Calu3 (cell line): ENCODE measurements at regions of chr2 and their contacts with region 1.

Region 1: DNA sequence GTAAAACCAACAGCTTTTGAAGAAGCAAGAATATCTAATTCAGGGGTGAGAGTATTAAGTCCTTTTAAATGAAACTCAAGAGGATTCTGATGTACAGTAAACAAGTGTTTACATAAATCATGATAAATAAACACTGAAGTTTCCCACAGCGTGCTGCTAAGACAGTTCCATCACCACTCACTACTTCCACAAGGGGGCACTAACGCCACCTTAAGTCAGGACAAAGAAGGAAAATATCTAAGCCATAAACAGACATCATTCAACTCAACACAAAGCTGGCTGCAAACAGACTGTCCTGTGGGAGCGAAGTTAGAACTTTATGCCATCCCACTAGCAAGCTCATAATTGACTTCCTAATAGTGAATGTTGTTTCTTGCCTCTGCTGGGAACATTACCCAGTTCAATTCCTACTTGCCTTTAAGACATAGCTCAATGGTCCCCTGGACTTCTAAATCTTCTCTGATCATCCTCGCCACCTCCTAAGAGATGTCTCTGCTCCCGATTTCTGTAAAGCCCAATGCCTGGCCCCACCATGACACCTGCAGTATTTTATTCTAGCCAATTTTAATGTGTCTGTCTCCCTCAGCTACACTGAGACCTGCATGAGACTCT is 36.5 kb downstream of the MRPL44 start:
- DNase-seq: peak; percentile 74
- H3K4me3 Mint-ChIP-seq: no peak overlapping the region
- H3K27ac Mint-ChIP-seq: peak overlapping the region; percentile 81
- H3K4me1 Mint-ChIP-seq: peaks cover 33% of the 10 kb centered on the region
- H3K27me3 Mint-ChIP-seq: no peaks in the 10 kb centered on the region
- CTCF ChIP-seq: peak; percentile 72

Region 2: GRCh38 chr2:223970343-223971128 is 23.2 kb before region 1 on chr2:
- CTCF ChIA-PET with region 1: interaction called, 10 read pairs
- intact Hi-C with region 1: no loop called
- DNase-seq: peak; percentile 62
- H3K4me3 Mint-ChIP-seq: no peak overlapping the region
- H3K27ac Mint-ChIP-seq: no peak overlapping the region
- H3K4me1 Mint-ChIP-seq: no peaks in the 10 kb centered on the region
- H3K27me3 Mint-ChIP-seq: no peaks in the 10 kb centered on the region
- CTCF ChIP-seq: peak; percentile 73

Region 3: GRCh38 chr2:224039124-224039940 is 45.6 kb after region 1 on chr2 and contains the start of gene SERPINE2:
- CTCF ChIA-PET with region 1: interaction called, 6 read pairs
- intact Hi-C with region 1: loop called (anchors 1 kb)
- DNase-seq: peak; percentile 76
- H3K4me3 Mint-ChIP-seq: peak within 1 kb of the TSS; percentile 93
- H3K27ac Mint-ChIP-seq: peak within 1 kb of the TSS; percentile 59
- H3K4me1 Mint-ChIP-seq: peaks cover 40% of the 10 kb centered on the region
- H3K27me3 Mint-ChIP-seq: peaks cover 38% of the 10 kb centered on the region
- CTCF ChIP-seq: no peak
- total RNA-seq, gene SERPINE2: 34.7 and 39.7 TPM in 2 replicates

Region 4: GRCh38 chr2:224145751-224146355 is 152.1 kb after region 1 on chr2:
- CTCF ChIA-PET with region 1: interaction called, 5 read pairs
- intact Hi-C with region 1: loop called (anchors 5 kb)
- DNase-seq: no peak
- H3K4me3 Mint-ChIP-seq: no peak overlapping the region
- H3K27ac Mint-ChIP-seq: peak overlapping the region; percentile 14
- H3K4me1 Mint-ChIP-seq: peaks cover 46% of the 10 kb centered on the region
- H3K27me3 Mint-ChIP-seq: no peaks in the 10 kb centered on the region
- CTCF ChIP-seq: no peak

Region 5: GRCh38 chr2:224284134-224284946 is 290.6 kb after region 1 on chr2:
- CTCF ChIA-PET with region 1: interaction called, 50 read pairs
- intact Hi-C with region 1: loop called (anchors 1 kb)
- DNase-seq: peak; percentile 39
- H3K4me3 Mint-ChIP-seq: no peak overlapping the region
- H3K27ac Mint-ChIP-seq: no peak overlapping the region
- H3K4me1 Mint-ChIP-seq: no peaks in the 10 kb centered on the region
- H3K27me3 Mint-ChIP-seq: no peaks in the 10 kb centered on the region
- CTCF ChIP-seq: peak; percentile 91

Region 6: DNA sequence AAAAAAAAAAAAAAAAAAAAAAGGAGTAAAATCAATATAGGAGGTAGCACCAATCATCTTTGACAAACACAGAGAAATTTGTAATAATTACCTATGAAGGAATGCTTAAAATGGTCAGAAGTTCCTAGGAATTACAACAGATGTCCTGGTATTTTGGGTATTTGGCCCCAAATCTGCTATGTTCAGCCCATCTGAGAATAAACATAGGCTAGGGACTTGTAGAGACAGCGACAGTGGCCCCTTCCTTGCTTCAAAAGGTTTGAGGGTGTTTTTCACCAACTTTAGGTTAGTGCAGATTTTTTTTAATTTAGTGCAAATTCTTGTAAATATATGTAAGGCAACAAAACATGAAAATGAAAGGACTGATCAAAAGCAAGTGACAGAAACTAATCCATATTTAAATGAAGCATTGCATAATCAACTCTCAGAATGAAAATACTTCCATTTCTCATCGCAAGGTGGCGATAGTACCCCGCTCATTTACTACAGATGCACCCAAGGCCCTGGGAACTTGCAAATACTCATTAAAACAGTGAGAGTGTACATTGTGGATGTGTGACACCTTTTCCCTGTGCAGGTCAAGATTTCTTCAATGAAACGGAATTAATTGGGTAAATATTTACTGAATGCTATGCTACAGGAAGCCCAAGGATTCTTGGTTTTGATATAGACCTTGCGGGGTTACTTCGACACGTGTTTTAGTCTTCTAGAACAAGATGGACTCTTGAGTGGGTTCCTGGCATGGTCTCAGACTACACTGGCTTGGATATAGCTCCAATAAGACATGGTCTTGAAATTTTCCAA is 363.6 kb after region 1 on chr2:
- CTCF ChIA-PET with region 1: no interaction called
- intact Hi-C with region 1: loop called (anchors 5 kb)
- DNase-seq: peak; percentile 72
- H3K4me3 Mint-ChIP-seq: no peak overlapping the region
- H3K27ac Mint-ChIP-seq: no peak overlapping the region
- H3K4me1 Mint-ChIP-seq: no peaks in the 10 kb centered on the region
- H3K27me3 Mint-ChIP-seq: peaks cover 26% of the 10 kb centered on the region
- CTCF ChIP-seq: peak; percentile 49